ENCODE measurements at regions of chr9 and their contacts with region 1.

Region 1: DNA sequence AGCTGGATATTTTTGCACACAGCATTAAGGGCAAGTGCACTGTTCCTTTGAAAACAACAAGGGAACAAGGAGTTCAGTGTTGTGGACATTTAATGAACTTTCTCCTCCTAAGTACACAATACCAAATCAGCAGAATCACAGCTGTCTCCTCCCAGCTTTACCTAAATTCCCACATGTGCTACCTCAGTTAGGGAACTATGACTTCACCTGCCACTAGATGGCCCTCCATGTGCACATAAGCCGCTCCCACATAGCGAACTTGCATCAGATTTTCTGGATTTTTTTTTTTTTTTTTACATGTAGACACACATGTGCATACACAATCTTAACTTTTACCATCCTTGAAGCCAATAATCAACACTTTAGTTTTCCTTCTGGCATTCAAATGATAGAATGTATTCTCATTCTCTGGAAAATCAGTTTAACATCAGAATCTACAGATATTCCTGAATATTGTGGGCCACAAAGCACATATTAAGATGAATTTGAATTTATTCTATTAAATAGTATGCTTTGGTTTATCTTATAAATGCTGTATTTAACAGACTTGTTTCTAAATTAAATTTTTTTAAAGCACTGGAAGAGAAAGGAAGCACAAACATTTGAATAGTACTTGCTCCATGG is 123.6 kb downstream of the PALM2AKAP2 start:
- DNase-seq: peak; percentile 64 to 81
- ATAC-seq: peak; percentile 80 to 95
- H3K4me3 ChIP-seq: no peak overlapping the region
- H3K27ac ChIP-seq: peak overlapping the region in 1 of 2 experiments; percentile 54; a peak in 3 of 6 replicates
- H3K4me1 ChIP-seq: peaks cover 3% of the 10 kb centered on the region; the same call in 1 of the 3 replicates
- CTCF ChIP-seq: peak; percentile 92
- EP300 ChIP-seq: no peak
- POLR2A ChIP-seq: no peak
- RAD21 ChIP-seq: peak; percentile 98 to 99

Region 2: DNA sequence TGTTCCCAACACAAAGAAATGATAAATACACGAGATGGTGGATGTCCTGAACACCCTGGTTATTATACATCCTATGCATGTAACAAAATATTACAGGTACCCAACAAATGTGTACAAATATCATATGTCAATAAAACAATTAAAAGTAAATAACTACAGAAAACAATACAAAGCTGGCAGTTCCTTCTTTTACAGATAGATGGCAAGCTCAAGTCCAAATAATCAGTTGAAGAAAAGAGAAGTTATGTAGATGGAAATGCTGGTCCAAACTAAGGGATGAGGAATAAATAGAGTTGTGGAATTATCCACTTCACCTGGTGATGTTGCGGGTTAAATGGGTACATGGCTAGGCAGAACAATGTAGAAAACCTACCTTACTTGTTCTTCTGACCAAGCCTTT is 44.2 kb before region 1 on chr9:
- CTCF ChIA-PET with region 1: interaction called, 12 read pairs
- POLR2A ChIA-PET with region 1: no interaction called
- DNase-seq: no peak
- ATAC-seq: no peak
- H3K4me3 ChIP-seq: no peak overlapping the region
- H3K27ac ChIP-seq: no peak overlapping the region
- H3K4me1 ChIP-seq: no peaks in the 10 kb centered on the region
- CTCF ChIP-seq: no peak
- EP300 ChIP-seq: no peak
- POLR2A ChIP-seq: no peak
- RAD21 ChIP-seq: no peak

Region 3: DNA sequence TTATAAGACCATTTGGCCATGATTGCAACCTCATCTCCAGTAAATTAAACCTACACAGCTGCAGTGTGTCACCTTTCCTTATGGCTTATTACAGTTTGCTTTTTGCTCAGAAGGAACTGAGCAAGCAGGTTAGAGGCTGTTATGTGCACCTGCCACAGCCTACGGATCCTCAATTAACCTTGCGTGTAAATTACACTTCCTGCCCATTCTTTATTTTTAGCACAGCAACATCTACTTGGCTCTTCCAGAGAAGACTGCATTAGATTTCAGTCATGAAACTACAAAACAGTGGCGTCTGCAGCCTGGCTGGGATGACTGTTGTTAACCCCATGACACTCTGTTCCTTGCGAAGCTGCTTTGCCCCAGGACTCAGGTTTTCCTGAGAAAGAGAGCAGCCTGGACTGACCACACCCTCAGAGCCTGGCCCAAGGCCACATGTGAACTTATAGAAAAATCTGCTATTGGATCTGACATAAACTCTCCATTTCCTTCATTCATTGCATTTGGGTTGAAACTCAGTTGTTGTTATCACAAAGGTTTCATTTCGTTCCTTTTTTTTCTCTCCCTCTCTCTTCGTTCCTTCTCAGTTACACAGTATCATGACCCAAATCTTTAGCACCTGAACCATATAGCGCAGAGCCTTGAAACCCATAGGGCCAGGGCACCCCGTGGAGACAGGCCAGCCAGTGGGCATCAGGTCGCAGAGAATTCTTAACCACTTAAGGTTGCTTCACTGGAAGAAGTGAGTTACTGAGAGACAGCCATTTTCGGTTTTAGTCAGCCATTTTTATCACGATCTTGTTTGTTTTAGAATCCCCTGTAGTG is 14.9 kb after region 1 on chr9:
- CTCF ChIA-PET with region 1: interaction called, 22 read pairs
- POLR2A ChIA-PET with region 1: no interaction called
- DNase-seq: no peak
- ATAC-seq: 0 out of 6 replicates have a peak, but pooled peaks of 1 of the 2 experiments have one; percentile 30
- H3K4me3 ChIP-seq: no peak overlapping the region
- H3K27ac ChIP-seq: no peak overlapping the region
- H3K4me1 ChIP-seq: no peaks in the 10 kb centered on the region
- CTCF ChIP-seq: no peak
- EP300 ChIP-seq: no peak
- POLR2A ChIP-seq: no peak
- RAD21 ChIP-seq: no peak

Region 4: DNA sequence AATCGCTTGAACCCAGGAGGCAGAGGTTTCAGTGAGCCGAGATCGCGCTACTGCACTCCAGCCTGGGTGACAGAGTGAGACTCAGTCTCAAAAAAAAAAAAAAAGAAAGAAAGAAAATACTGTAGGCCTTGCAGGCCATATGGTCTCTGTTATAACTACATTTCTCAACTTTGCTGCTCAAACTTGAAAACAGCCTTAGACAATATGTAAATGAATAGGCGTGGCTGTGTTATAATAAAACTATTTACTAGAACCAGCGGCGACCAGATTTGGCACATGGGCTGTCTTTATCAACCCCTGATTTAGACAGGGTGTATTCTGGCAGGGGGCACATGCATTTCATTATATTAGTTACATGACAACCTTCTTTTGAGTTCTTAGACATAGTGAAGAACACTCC is 174.3 kb after region 1 on chr9:
- CTCF ChIA-PET with region 1: interaction called, 15 read pairs
- POLR2A ChIA-PET with region 1: no interaction called
- DNase-seq: no peak
- ATAC-seq: no peak
- H3K4me3 ChIP-seq: no peak overlapping the region
- H3K27ac ChIP-seq: no peak overlapping the region
- H3K4me1 ChIP-seq: peaks cover 28% of the 10 kb centered on the region
- CTCF ChIP-seq: no peak
- EP300 ChIP-seq: no peak
- POLR2A ChIP-seq: no peak
- RAD21 ChIP-seq: no peak

Region 5: GRCh38 chr9:110152704-110153374 is 249.2 kb after region 1 on chr9:
- CTCF ChIA-PET with region 1: interaction called, 207 read pairs
- POLR2A ChIA-PET with region 1: no interaction called
- DNase-seq: peak; percentile 19 to 42
- ATAC-seq: peak; percentile 80 to 82
- H3K4me3 ChIP-seq: no peak overlapping the region
- H3K27ac ChIP-seq: 0 out of 6 replicates have a peak overlapping the region, but pooled peaks of 1 of the 2 experiments have one; percentile 12
- H3K4me1 ChIP-seq: no peaks in the 10 kb centered on the region
- CTCF ChIP-seq: peak; percentile 92
- EP300 ChIP-seq: no peak
- POLR2A ChIP-seq: no peak
- RAD21 ChIP-seq: peak; percentile 95

Region 6: DNA sequence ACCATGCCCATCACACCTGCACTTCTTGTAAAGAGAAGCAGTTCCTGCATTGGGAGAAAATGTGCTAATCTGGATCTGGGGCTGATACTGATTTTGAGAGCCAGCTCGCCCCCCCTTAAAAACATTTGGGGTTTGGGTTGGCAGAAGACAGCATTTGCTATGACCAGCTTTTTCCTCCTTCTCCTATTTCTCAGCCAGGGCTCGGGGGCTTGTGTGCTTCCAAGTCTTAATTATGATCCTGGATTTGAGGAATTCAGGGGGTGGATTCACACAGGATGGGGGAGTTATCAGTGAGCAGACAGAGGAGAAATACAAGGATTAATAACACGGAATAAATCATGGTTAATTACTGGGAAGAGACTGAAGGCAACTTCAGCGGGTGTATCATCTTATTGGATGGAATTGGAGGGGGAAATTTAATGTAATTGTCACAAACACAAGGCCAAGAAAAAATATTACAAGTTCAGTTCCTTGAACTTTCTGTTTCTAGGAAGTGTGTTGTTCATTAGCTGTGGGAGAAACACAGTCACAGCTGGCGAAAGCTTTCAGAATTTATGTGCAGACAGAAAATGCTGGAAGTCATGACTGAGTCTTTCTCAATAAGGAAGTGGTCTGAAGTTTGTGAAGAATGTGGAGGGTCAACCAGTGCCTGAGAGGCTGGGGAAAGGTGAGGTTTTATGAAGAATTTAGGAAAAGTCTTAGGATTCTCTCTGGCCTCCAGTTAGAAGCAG is 289.1 kb after region 1 on chr9:
- CTCF ChIA-PET with region 1: interaction called, 12 read pairs
- POLR2A ChIA-PET with region 1: no interaction called
- DNase-seq: peak in 1 of 2 experiments; percentile 23
- ATAC-seq: no peak
- H3K4me3 ChIP-seq: no peak overlapping the region
- H3K27ac ChIP-seq: peak overlapping the region; percentile 60 to 69; a peak in 5 of 6 replicates
- H3K4me1 ChIP-seq: peaks cover 42% of the 10 kb centered on the region
- CTCF ChIP-seq: no peak
- EP300 ChIP-seq: no peak
- POLR2A ChIP-seq: no peak
- RAD21 ChIP-seq: no peak

Region 7: GRCh38 chr9:110410961-110411360 is 507.3 kb after region 1 on chr9:
- CTCF ChIA-PET with region 1: no interaction called
- POLR2A ChIA-PET with region 1: no interaction called
- DNase-seq: no peak
- ATAC-seq: no peak
- H3K4me3 ChIP-seq: no peak overlapping the region
- H3K27ac ChIP-seq: no peak overlapping the region
- H3K4me1 ChIP-seq: no peaks in the 10 kb centered on the region
- CTCF ChIP-seq: no peak
- EP300 ChIP-seq: no peak
- POLR2A ChIP-seq: no peak
- RAD21 ChIP-seq: no peak